Head of caudate nucleus (tissue), 42 donors: ENCODE measurements at regions of chr6 and their contacts with region 1.

Region 1: DNA sequence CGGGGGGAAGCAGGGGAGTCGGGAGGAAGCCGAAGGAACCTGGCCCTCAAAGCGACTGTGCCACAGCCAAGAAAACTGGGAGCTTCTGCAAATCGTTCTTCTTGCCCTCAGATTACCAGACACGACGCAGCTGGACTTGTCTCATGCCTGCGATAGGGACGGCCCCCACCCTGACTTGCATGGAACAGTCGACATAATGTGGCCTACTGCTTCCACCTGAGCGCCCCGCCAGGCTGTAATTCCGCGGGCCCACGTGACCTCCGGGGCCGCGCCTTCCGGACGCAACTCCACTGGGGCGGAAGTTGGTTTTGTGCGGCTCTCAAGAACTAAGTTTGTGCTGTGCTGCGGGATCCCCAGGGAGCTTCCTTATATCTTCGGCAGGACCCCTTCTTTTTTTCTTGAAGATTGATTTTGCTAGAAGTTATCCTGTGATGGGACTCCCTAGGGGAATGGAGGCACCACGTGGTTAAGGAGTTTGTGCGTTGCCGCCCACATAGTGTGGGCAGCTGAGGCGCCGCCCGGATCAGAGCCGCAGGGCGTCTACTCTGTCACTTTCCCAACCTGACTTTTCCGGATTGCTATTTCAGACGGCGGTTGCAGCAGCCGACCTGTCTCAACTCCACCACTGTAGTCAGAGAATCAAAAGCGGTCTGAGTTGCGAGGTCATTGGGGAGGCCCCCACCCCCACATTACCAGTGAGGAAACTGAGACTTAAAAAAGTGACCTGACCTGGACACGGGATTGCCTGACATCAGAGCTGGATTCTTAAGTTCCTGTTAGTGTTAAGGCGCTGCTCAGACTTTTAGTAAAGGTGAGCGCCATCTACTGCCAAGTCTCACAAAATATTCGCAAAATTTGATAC is 540 bp upstream of the CD164 start:
- DNase-seq: peak; percentile 81 to 95 (median 90)

Region 2: DNA sequence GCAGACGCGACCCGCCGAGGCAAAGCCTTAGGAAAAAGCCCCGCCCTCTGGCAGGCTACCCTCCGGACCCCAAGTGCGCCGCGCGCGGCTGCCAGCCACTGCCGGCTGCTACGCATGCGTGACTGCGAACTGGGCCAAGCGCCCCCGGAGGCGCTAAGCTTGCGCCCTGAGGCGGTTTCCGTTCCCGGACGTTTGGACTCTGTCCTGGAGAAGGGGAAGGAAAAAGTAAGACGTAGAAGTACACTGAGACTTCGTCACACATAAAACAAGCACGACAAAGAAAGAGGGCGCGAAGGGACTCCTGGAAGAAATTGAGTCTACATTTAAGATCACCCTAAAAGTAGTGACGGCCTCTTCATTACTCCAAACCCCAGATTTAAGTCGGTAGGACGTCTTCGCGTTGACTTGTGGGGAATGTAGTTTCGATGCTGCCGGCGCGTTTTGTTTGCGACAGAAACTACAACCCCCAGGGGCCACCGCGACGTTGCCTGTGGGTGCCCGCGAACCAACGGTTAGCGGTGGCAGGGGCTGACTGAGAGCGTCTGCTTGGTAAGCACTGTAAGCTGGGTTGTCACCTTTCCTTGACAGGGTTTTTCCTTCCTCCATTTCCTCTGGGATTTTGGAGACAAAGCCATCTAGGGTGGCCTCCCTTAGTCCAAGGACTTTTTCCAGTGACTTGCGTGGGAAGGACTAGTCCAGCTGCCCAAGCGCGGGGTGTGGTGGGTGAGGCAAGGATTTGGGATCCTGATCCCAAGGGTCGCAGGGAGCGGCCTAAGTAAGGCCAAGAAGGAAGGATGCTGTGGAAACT is 287.6 kb before region 1 on chr6 and contains the start of gene CEP57L1:
- intact Hi-C with region 1: loop called (anchors 1 kb)
- DNase-seq: peak; percentile 93 to 99 (median 96)

Region 3: GRCh38 chr6:109187399-109188114 is 195.2 kb before region 1 on chr6:
- intact Hi-C with region 1: loop called (anchors 5 kb)
- DNase-seq: peak; percentile 8 to 89 (median 65)

Region 4: GRCh38 chr6:109318328-109318876 is 64.4 kb before region 1 on chr6:
- intact Hi-C with region 1: loop called (anchors 5 kb)
- DNase-seq: peak; percentile 53 to 91 (median 78)

Region 5: DNA sequence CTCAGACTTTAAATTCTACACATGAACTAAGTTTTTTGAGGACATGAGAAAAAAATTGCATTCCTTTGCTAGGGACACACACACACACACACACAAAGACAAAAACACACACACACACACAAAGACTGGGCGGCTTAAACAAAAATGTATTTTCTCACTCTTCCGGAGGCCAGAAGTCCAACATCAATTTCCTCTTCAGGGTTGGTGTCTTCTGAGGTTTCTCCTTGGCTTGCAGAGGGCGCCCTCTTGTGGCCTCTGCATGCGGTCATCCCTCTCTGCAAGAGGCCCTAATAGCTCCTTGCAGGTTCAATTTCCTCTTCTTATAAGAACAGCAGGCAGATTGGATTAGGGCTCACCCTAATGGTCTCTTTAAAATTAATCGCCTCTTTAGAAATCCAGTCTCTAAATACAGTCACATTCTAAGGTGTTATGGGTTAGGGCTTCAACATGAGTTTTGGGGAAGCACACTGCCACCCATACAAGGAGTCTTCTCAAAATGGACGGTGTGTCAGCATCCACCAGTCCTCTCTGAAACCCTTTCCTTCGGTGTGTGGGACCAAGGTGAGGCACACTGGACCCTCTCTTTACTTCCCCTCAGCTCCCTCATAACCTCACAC is 656.7 kb after region 1 on chr6:
- intact Hi-C with region 1: no loop called
- DNase-seq: peak; percentile 69 to 94 (median 89)